ENCODE measurements at regions of chr14 and their contacts with region 1.

Region 1: GRCh38 chr14:93788543-93789227 is 400 bp upstream of the PRIMA1 start:
- DNase-seq: peak; percentile 55
- H3K4me3 ChIP-seq: peak overlapping the region; percentile 35 to 43 (median 43)
- H3K27ac ChIP-seq: no peak overlapping the region
- H3K4me1 ChIP-seq: peaks cover 5% of the 10 kb centered on the region
- H3K27me3 ChIP-seq: peaks cover 3% of the 10 kb centered on the region
- CTCF ChIP-seq: peak in 1 of 2 donors; percentile 38

Region 2: GRCh38 chr14:93655078-93655750 is 133.5 kb before region 1 on chr14:
- CTCF ChIA-PET with region 1: no interaction called
- dilution Hi-C with region 1: no loop called
- in situ Hi-C with region 1: no loop called
- intact Hi-C with region 1: loop called (anchors 1 kb)
- DNase-seq: peak; percentile 40
- H3K4me3 ChIP-seq: no peak overlapping the region
- H3K27ac ChIP-seq: no peak overlapping the region
- H3K4me1 ChIP-seq: no peaks in the 10 kb centered on the region
- H3K27me3 ChIP-seq: no peaks in the 10 kb centered on the region
- CTCF ChIP-seq: peak; percentile 39 to 57

Region 3: GRCh38 chr14:93702946-93703345 is 85.7 kb before region 1 on chr14:
- CTCF ChIA-PET with region 1: no interaction called
- dilution Hi-C with region 1: loop called (anchors 5 kb)
- in situ Hi-C with region 1: no loop called
- intact Hi-C with region 1: no loop called
- DNase-seq: no peak
- H3K4me3 ChIP-seq: no peak overlapping the region
- H3K27ac ChIP-seq: no peak overlapping the region
- H3K4me1 ChIP-seq: no peaks in the 10 kb centered on the region
- H3K27me3 ChIP-seq: no peaks in the 10 kb centered on the region
- CTCF ChIP-seq: no peak

Region 4: DNA sequence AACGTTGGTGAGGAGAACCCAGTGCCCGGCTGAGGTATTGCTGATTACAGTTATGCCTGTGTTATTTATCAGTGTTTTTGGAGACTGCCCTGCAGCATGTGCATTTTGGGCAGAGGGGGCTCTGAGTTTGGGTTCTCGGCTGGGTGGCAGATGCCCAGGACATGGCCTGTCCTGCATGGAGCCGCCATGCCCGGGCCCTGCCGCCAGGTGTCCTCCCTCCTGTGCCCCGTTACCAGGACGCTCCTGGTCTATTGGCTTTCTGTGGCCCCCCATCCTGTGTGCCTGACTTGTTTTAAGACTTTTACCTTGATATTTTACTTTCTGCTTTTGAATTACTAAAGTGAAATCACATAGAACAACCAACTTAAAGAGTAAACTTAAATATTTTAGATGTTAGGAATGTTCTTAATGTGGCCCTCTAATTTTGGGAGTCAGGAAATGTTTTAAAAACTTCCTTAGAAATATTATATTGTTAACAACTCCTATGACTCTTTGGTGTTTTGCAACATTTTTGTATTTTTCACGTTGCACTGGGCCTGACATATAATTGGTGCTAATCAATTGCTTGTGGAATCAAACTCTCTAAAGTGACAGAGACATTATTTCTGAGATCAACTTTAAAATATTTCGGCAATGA is 52.2 kb before region 1 on chr14:
- CTCF ChIA-PET with region 1: no interaction called
- dilution Hi-C with region 1: no loop called
- in situ Hi-C with region 1: no loop called
- intact Hi-C with region 1: loop called (anchors 5 kb)
- DNase-seq: no peak
- H3K4me3 ChIP-seq: no peak overlapping the region
- H3K27ac ChIP-seq: no peak overlapping the region
- H3K4me1 ChIP-seq: no peaks in the 10 kb centered on the region
- H3K27me3 ChIP-seq: no peaks in the 10 kb centered on the region
- CTCF ChIP-seq: no peak

Region 5: GRCh38 chr14:93834699-93835371 is 46.1 kb after region 1 on chr14:
- CTCF ChIA-PET with region 1: no interaction called
- dilution Hi-C with region 1: loop called (anchors 5 kb)
- in situ Hi-C with region 1: no loop called
- intact Hi-C with region 1: no loop called
- DNase-seq: peak; percentile 6
- H3K4me3 ChIP-seq: no peak overlapping the region
- H3K27ac ChIP-seq: no peak overlapping the region
- H3K4me1 ChIP-seq: no peaks in the 10 kb centered on the region
- H3K27me3 ChIP-seq: no peaks in the 10 kb centered on the region
- CTCF ChIP-seq: no peak

Region 6: GRCh38 chr14:93859957-93860356 is 71.3 kb after region 1 on chr14:
- CTCF ChIA-PET with region 1: no interaction called
- dilution Hi-C with region 1: loop called (anchors 5 kb)
- in situ Hi-C with region 1: no loop called
- intact Hi-C with region 1: no loop called
- DNase-seq: no peak
- H3K4me3 ChIP-seq: no peak overlapping the region
- H3K27ac ChIP-seq: no peak overlapping the region
- H3K4me1 ChIP-seq: no peaks in the 10 kb centered on the region
- H3K27me3 ChIP-seq: no peaks in the 10 kb centered on the region
- CTCF ChIP-seq: no peak

Measured in mammary epithelial cell (primary cell).